CD4-positive, alpha-beta memory T cell (primary cell): ENCODE measurements at regions of chr1 and their contacts with region 1.

Region 1: GRCh38 chr1:156728597-156729462 is at the start of gene ISG20L2:
- DNase-seq: peak; percentile 92 to 99 (median 96)
- H3K4me3 ChIP-seq: peak within 1 kb of the TSS; percentile 96 to 99
- H3K4me3 Mint-ChIP-seq: no peak within 1 kb of the TSS
- H3K27ac ChIP-seq: peak within 1 kb of the TSS; percentile 90
- H3K27ac Mint-ChIP-seq: peak within 1 kb of the TSS in 3 of 7 donors; percentile 94 to 99 (median 98)
- H3K4me1 ChIP-seq: peaks cover 47% of the 10 kb centered on the region
- H3K4me1 Mint-ChIP-seq: peaks cover 8 to 19% (median 10%) of the 10 kb centered on the region in 4 donors
- H3K27me3 ChIP-seq: no peaks in the 10 kb centered on the region
- H3K27me3 Mint-ChIP-seq: no peaks in the 10 kb centered on the region
- total RNA-seq, gene ISG20L2: 47.9 to 53.1 TPM

Region 2: DNA sequence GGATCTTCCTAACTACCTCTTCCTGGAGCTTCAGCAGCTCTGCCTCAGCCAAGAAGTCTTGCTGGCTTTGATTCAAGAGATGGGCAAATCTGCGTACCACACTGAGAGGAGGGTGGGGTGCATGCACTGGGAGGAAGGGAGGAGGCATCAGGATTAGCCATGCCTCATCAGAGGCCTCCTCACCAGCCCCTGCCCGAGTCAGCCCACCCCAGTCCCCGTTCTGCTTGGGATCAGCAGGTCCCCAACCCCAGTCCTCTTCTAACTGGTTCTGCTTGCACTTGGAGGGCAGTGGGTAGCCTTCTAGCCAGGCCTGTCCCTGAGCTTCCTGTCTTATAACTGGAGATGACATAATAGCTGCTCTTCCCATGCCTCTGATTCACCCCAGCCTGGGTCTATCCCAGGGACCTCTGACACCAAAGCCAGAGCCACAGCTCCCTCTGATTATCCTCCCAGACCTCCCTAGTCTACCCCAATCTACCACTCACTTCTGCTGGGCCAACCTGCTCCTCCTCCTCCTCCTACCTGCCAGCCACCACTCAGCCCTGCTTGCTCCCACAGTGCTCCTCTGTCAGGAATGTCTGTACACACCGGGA is 187.9 kb before region 1 on chr1:
- CTCF ChIA-PET with region 1: no interaction called
- POLR2A ChIA-PET with region 1: no interaction called
- intact Hi-C with region 1: no loop called
- DNase-seq: no peak
- H3K4me3 ChIP-seq: no peak overlapping the region
- H3K4me3 Mint-ChIP-seq: no peak overlapping the region
- H3K27ac ChIP-seq: no peak overlapping the region
- H3K27ac Mint-ChIP-seq: no peak overlapping the region
- H3K4me1 ChIP-seq: no peaks in the 10 kb centered on the region
- H3K4me1 Mint-ChIP-seq: peaks cover 0 to 3% (median 0%) of the 10 kb centered on the region in 4 donors
- H3K27me3 ChIP-seq: no peaks in the 10 kb centered on the region
- H3K27me3 Mint-ChIP-seq: no peaks in the 10 kb centered on the region

Region 3: GRCh38 chr1:156625436-156626078 is 103.3 kb before region 1 on chr1:
- CTCF ChIA-PET with region 1: interaction called, 17 read pairs
- POLR2A ChIA-PET with region 1: interaction called, 4 read pairs
- intact Hi-C with region 1: loop called (anchors 5 kb)
- DNase-seq: peak in 4 of 5 donors; percentile 58 to 68 (median 62)
- H3K4me3 ChIP-seq: peak overlapping the region in 1 of 2 donors; percentile 47
- H3K4me3 Mint-ChIP-seq: peak overlapping the region; percentile 69 to 88 (median 80)
- H3K27ac ChIP-seq: no peak overlapping the region
- H3K27ac Mint-ChIP-seq: peak overlapping the region in 2 of 7 donors; percentile 49 to 93
- H3K4me1 ChIP-seq: peaks cover 20% of the 10 kb centered on the region
- H3K4me1 Mint-ChIP-seq: peaks cover 6 to 16% (median 9%) of the 10 kb centered on the region in 4 donors
- H3K27me3 ChIP-seq: peaks cover 26% of the 10 kb centered on the region
- H3K27me3 Mint-ChIP-seq: peaks cover 31 to 38% of the 10 kb centered on the region in 2 donors

Region 4: GRCh38 chr1:156698995-156699394 is 29.8 kb before region 1 on chr1:
- CTCF ChIA-PET with region 1: interaction called, 314 read pairs
- POLR2A ChIA-PET with region 1: no interaction called
- intact Hi-C with region 1: no loop called
- DNase-seq: no peak
- H3K4me3 ChIP-seq: no peak overlapping the region
- H3K4me3 Mint-ChIP-seq: no peak overlapping the region
- H3K27ac ChIP-seq: no peak overlapping the region
- H3K27ac Mint-ChIP-seq: peak overlapping the region in 1 of 7 donors; percentile 18
- H3K4me1 ChIP-seq: no peaks in the 10 kb centered on the region
- H3K4me1 Mint-ChIP-seq: peaks cover 0 to 2% (median under 1%) of the 10 kb centered on the region in 4 donors
- H3K27me3 ChIP-seq: no peaks in the 10 kb centered on the region
- H3K27me3 Mint-ChIP-seq: peaks cover 14 to 34% of the 10 kb centered on the region in 2 donors

Region 5: DNA sequence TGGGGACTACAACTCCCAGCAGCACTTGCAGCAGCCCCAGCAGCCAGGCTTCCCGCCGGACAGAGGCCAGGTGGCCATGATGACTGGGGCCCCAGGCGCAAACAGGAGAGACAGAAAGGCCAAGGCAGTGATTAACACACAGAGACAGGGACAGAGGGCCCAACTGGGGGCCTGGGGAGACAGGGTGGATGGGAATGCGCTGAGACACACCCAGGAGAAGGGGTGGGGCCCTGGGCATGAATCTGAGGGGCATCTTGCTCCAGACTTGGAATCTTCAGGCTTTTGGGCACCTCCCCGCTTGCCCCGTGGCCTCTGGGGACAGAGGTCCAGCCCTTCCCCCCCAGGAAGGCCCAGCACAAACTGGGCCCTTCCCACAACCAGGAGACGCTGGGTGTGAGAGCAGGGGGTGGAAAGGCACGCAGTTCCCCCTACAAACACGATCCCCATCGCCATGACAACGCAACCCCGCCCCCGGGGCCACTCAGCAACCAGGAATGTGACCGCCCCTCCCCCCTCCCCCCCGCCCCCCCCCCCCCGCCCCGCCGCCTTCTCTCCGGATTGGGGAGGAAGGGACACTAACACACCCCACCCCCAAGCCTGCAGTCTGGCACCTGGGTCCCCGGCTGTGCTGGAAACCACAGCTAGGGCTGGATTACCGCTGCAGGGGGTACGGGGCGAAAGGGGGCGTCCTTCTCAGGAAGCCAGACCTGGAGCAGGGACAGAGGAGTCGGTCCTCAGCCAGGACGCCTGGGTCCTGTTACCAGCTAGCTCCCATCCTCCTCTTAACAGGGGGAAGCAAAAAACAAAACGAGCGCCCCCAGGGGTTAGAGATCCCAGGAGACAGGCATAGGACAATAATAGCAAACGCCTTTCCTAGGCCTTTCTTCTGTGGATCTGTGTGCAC is 18.1 kb after region 1 on chr1:
- CTCF ChIA-PET with region 1: interaction called, 34 read pairs
- POLR2A ChIA-PET with region 1: interaction called, 126 read pairs
- intact Hi-C with region 1: loop called (anchors 1 kb)
- DNase-seq: peak; percentile 34 to 79 (median 47)
- H3K4me3 ChIP-seq: peak overlapping the region; percentile 13 to 57
- H3K4me3 Mint-ChIP-seq: peak overlapping the region; percentile 84 to 98 (median 92)
- H3K27ac ChIP-seq: peak overlapping the region; percentile 75
- H3K27ac Mint-ChIP-seq: peak overlapping the region; percentile 87 to 95 (median 94)
- H3K4me1 ChIP-seq: peaks cover 46% of the 10 kb centered on the region
- H3K4me1 Mint-ChIP-seq: peaks cover 42 to 69% (median 50%) of the 10 kb centered on the region in 4 donors
- H3K27me3 ChIP-seq: no peaks in the 10 kb centered on the region
- H3K27me3 Mint-ChIP-seq: no peaks in the 10 kb centered on the region

Region 6: GRCh38 chr1:156797212-156797871 is 68.5 kb after region 1 on chr1:
- CTCF ChIA-PET with region 1: interaction called, 38 read pairs
- POLR2A ChIA-PET with region 1: interaction called, 3 read pairs
- intact Hi-C with region 1: no loop called
- DNase-seq: peak; percentile 66 to 75 (median 74)
- H3K4me3 ChIP-seq: no peak overlapping the region
- H3K4me3 Mint-ChIP-seq: no peak overlapping the region
- H3K27ac ChIP-seq: no peak overlapping the region
- H3K27ac Mint-ChIP-seq: peak overlapping the region in 6 of 7 donors; percentile 12 to 45 (median 24)
- H3K4me1 ChIP-seq: peaks cover 17% of the 10 kb centered on the region
- H3K4me1 Mint-ChIP-seq: peaks cover 18 to 30% (median 21%) of the 10 kb centered on the region in 4 donors
- H3K27me3 ChIP-seq: no peaks in the 10 kb centered on the region
- H3K27me3 Mint-ChIP-seq: no peaks in the 10 kb centered on the region

Region 7: GRCh38 chr1:156892190-156893047 is 163.6 kb after region 1 on chr1:
- CTCF ChIA-PET with region 1: interaction called, 52 read pairs
- POLR2A ChIA-PET with region 1: no interaction called
- intact Hi-C with region 1: loop called (anchors 1 kb)
- DNase-seq: peak; percentile 77 to 82 (median 80)
- H3K4me3 ChIP-seq: peak overlapping the region in 1 of 2 donors; percentile 34
- H3K4me3 Mint-ChIP-seq: peak overlapping the region; percentile 69 to 84 (median 73)
- H3K27ac ChIP-seq: no peak overlapping the region
- H3K27ac Mint-ChIP-seq: peak overlapping the region in 6 of 7 donors; percentile 25 to 77 (median 54)
- H3K4me1 ChIP-seq: peaks cover 22% of the 10 kb centered on the region
- H3K4me1 Mint-ChIP-seq: peaks cover 7 to 29% (median 9%) of the 10 kb centered on the region in 4 donors
- H3K27me3 ChIP-seq: peaks cover 11% of the 10 kb centered on the region
- H3K27me3 Mint-ChIP-seq: peaks cover 20 to 32% of the 10 kb centered on the region in 2 donors

Region 8: GRCh38 chr1:157580179-157580827 is 851.5 kb after region 1 on chr1:
- CTCF ChIA-PET with region 1: no interaction called
- POLR2A ChIA-PET with region 1: no interaction called
- intact Hi-C with region 1: no loop called
- DNase-seq: peak; percentile 21 to 32 (median 26)
- H3K4me3 ChIP-seq: no peak overlapping the region
- H3K4me3 Mint-ChIP-seq: no peak overlapping the region
- H3K27ac ChIP-seq: no peak overlapping the region
- H3K27ac Mint-ChIP-seq: no peak overlapping the region
- H3K4me1 ChIP-seq: no peaks in the 10 kb centered on the region
- H3K4me1 Mint-ChIP-seq: no peaks in the 10 kb centered on the region
- H3K27me3 ChIP-seq: no peaks in the 10 kb centered on the region
- H3K27me3 Mint-ChIP-seq: peaks cover 7 to 8% of the 10 kb centered on the region in 2 donors